CD8-positive, alpha-beta memory T cell (primary cell): ENCODE measurements at regions of chr1 and their contacts with region 1.

Region 1: GRCh38 chr1:180482425-180483275 is 19.7 kb downstream of the ACBD6 start:
- DNase-seq: peak in 2 of 5 donors; percentile 22 to 26
- H3K4me3 ChIP-seq: no peak overlapping the region
- H3K4me3 Mint-ChIP-seq: peak overlapping the region in 3 of 7 donors; percentile 29 to 38 (median 29)
- H3K27ac ChIP-seq: no peak overlapping the region
- H3K27ac Mint-ChIP-seq: peak overlapping the region in 1 of 8 donors; percentile 55
- H3K4me1 ChIP-seq: peaks cover 7% of the 10 kb centered on the region
- H3K4me1 Mint-ChIP-seq: peaks cover 10 to 21% (median 14%) of the 10 kb centered on the region in 3 donors
- H3K27me3 ChIP-seq: no peaks in the 10 kb centered on the region
- H3K27me3 Mint-ChIP-seq: no peaks in the 10 kb centered on the region

Region 2: DNA sequence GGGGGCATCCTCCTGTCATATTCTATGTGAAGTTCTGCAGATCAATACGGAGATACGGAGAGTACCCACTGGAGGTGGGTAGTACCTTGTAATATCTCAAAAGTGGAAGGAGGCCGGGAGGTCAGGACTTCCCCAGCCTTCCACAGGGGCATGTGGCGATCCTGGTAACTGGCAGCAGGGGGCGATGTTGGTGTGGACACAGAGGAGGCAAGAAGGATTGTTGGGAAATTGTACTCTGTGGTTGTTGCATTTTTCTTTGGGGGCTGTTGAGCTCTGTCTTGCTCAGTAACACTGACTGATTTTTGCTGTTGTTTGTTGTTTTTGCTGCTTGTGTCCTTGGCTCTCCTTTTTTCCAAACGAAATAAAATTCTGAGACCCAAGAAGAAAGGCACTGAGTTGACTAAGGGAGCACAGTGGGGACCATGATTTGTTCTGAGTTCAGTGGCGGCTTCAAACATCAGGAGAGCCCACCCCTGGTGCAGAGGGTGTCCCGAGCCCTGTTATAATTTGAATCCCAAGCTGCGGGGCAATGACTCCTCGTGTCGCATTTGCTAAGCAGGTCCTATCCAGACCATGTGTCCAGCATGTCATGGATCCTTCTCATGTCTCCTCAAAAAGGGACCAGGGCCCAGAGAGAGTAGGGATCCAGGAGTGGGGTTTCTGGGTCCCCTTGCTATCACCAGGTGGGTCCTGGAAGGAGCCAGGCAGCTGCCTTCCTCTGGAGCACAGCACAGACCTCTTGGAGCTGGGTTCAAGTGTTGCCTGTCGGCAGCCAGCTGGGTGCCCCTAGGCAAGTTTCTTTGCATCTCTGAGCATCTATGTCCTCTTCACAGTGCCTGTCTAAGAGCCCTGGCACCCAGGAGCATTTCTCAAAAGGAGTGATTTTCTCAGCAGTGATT is 229.8 kb before region 1 on chr1:
- CTCF ChIA-PET with region 1: interaction called, 11 read pairs
- POLR2A ChIA-PET with region 1: no interaction called
- DNase-seq: peak; percentile 21 to 70 (median 50)
- H3K4me3 ChIP-seq: no peak overlapping the region
- H3K4me3 Mint-ChIP-seq: no peak overlapping the region
- H3K27ac ChIP-seq: no peak overlapping the region
- H3K27ac Mint-ChIP-seq: peak overlapping the region in 1 of 8 donors; percentile 24
- H3K4me1 ChIP-seq: no peaks in the 10 kb centered on the region
- H3K4me1 Mint-ChIP-seq: peaks cover 2 to 8% (median 3%) of the 10 kb centered on the region in 3 donors
- H3K27me3 ChIP-seq: peaks cover 37% of the 10 kb centered on the region
- H3K27me3 Mint-ChIP-seq: peaks cover 51 to 78% of the 10 kb centered on the region in 2 donors

Region 3: DNA sequence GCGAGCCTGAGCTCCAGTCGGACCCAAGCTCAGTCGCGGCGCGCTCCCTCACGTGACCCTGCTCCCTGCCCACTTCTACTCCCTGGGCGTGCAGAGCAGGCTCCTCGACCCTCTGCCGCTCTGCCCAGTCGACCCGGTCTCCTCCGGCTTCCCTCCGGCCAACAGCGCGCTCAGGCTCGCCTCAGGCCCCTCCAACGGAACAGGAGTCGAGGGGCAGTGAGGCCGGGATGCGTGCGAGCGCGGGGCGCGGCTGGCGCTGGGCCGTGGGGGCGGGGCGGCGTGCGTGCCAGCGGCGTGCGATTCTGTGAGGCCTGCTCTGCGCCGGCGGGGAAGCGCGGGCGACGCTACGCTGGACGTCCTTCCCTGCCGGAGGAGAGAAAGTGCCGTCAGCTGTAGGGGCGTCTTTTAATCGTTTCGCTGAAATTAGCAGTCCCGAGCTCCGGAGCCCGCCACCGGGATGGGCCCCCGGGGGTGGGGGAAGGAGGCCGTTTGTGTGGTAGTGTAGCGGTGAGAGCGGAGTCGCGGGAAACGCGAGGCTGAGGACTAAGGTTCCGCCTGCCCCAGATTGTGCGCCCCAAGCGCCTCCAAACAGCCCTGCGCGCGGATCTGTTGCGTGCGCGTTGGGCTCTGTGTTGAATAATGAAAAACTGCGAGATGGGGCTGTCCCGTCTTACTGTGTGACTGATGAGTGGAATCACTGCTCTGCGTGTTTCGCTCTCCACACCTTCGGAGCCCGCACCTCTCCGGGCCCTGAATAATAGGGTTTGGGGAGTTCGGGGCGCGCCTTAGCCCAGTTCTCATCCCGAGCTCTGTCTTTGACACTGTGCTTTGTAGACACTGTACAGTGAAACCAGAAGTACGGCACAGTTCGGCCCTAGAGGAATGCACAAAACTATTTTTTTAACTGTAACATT is 20.0 kb after region 1 on chr1 and contains the start of gene ACBD6:
- CTCF ChIA-PET with region 1: interaction called, 15 read pairs
- POLR2A ChIA-PET with region 1: no interaction called
- DNase-seq: peak; percentile 65 to 88 (median 83)
- H3K4me3 ChIP-seq: peak within 1 kb of the TSS; percentile 90
- H3K4me3 Mint-ChIP-seq: peak within 1 kb of the TSS; percentile 94 to 98 (median 96)
- H3K27ac ChIP-seq: peak within 1 kb of the TSS; percentile 62
- H3K27ac Mint-ChIP-seq: peak within 1 kb of the TSS; percentile 95 to 99 (median 97)
- H3K4me1 ChIP-seq: peaks cover 24% of the 10 kb centered on the region
- H3K4me1 Mint-ChIP-seq: peaks cover 31 to 54% (median 48%) of the 10 kb centered on the region in 3 donors
- H3K27me3 ChIP-seq: no peaks in the 10 kb centered on the region
- H3K27me3 Mint-ChIP-seq: no peaks in the 10 kb centered on the region
- total RNA-seq, gene ACBD6: 50.3 to 51.4 TPM